Ascending aorta (tissue), 2 donors: ENCODE measurements at regions of chr20 and their contacts with region 1.

Region 1: GRCh38 chr20:25623736-25624499 is at the start of gene NANP:
- DNase-seq: peak; percentile 95 to 99
- H3K4me3 ChIP-seq: peak within 1 kb of the TSS; percentile 88 to 95
- H3K27ac ChIP-seq: peak within 1 kb of the TSS; percentile 90 to 94
- H3K4me1 ChIP-seq: peaks cover 0 to 6% of the 10 kb centered on the region in 2 donors
- H3K27me3 ChIP-seq: no peaks in the 10 kb centered on the region
- CTCF ChIP-seq: no peak
- total RNA-seq, gene NANP: 2.6 TPM

Region 2: DNA sequence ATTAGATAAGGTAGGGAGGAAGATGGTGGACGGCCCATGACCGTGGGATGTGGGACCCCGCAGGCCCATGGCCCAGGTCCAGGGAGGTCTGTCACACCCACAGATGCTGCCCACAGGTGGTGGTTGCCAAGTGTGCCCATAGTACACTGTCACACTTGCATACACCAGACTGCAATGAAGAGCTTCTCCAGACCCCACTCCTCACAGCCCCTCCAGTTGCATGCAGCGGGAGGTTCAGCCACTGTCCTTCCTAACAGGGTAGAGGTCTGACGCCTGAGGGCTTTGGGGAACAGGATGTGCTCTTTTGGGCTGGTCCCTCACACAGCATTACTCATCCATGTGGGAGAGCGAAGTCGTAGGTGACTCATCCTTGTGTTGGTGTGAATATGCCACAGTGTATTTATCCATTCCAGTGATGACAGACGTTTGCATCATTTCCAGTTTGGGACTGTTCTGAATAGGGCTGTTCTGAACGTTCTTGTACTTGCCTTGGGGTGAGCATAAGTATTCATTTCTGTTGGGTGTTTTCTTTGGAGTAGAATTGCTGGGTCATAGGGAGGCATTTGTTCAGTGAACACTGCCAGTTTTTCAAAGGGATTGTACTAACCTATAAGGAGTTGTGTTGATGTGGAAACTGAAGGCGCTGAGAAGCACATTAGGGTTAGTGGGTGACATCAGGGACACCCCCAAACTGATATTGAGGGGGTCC is 386.2 kb before region 1 on chr20:
- intact Hi-C with region 1: no loop called
- DNase-seq: peak; percentile 78 to 94
- H3K4me3 ChIP-seq: no peak overlapping the region
- H3K27ac ChIP-seq: peak overlapping the region; percentile 83 to 97
- H3K4me1 ChIP-seq: peaks cover 21 to 48% of the 10 kb centered on the region in 2 donors
- H3K27me3 ChIP-seq: no peaks in the 10 kb centered on the region
- CTCF ChIP-seq: no peak

Region 3: GRCh38 chr20:25390538-25391528 is 233.1 kb before region 1 on chr20 and contains the start of gene ABHD12:
- intact Hi-C with region 1: loop called (anchors 10 kb)
- DNase-seq: peak; percentile 91 to 99
- H3K4me3 ChIP-seq: peak within 1 kb of the TSS; percentile 83 to 99
- H3K27ac ChIP-seq: peak within 1 kb of the TSS; percentile 70 to 91
- H3K4me1 ChIP-seq: peaks cover 0 to 3% of the 10 kb centered on the region in 2 donors
- H3K27me3 ChIP-seq: no peaks in the 10 kb centered on the region
- CTCF ChIP-seq: no peak
- total RNA-seq, gene ABHD12: 24.3 TPM

Region 4: GRCh38 chr20:25508078-25508770 is 115.7 kb before region 1 on chr20:
- intact Hi-C with region 1: loop called (anchors 1 kb)
- DNase-seq: no peak
- H3K4me3 ChIP-seq: no peak overlapping the region
- H3K27ac ChIP-seq: peak overlapping the region; percentile 63 to 70
- H3K4me1 ChIP-seq: peaks cover 4 to 10% of the 10 kb centered on the region in 2 donors
- H3K27me3 ChIP-seq: no peaks in the 10 kb centered on the region
- CTCF ChIP-seq: no peak

Region 5: DNA sequence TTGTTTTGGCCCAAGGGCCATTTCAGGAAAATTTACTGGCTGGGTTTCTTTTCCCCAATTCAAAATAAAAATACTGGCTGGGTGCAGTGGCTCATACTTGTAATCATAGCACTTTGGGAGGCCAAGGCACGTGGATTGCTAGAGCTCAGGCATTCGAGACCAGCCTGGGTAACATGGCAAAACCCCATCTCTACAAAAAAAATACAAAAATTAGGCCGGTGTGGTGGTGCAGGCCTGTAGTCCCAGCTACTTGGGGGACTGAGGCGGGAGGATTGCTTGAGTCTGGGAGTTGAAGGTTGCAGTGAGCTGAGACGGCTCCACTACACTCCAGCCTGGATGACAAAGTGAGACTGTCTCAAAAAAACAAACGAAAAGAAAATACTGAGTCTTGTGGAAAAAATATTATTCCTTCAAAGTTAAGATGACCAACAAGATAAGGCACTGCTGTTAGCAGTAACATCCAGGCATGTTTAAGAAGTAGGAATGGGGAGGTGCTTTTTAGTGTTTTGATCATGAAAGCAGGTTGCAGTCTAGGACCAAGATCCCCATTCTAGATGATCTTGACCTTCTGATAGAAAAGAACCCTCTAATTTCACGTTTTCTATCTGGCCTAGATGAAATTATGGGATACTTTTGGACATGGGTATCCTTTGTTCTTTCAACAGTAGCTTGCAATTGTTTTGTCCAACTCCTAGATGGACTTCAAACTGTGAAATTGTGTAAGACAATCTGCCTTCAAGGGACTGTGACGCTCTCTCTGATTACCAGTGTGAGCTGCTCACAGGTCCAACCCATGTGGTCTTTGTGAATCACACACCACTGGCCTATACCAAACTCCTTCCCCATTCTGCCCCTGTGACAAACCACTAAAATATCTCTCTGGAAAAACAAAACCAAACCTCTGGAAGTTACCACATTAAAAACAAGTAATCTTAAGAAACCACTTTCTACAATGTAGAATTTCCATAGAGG is 98.3 kb before region 1 on chr20:
- intact Hi-C with region 1: loop called (anchors 2 kb)
- DNase-seq: peak; percentile 49 to 87
- H3K4me3 ChIP-seq: peak overlapping the region in 1 of 2 donors; percentile 2
- H3K27ac ChIP-seq: peak overlapping the region; percentile 88 to 89
- H3K4me1 ChIP-seq: peaks cover 8 to 15% of the 10 kb centered on the region in 2 donors
- H3K27me3 ChIP-seq: no peaks in the 10 kb centered on the region
- CTCF ChIP-seq: no peak

Region 6: GRCh38 chr20:25584905-25585704 is 38.8 kb before region 1 on chr20 and contains the start of gene NINL:
- intact Hi-C with region 1: loop called (anchors 1 kb)
- DNase-seq: peak in 1 of 2 donors; percentile 78
- H3K4me3 ChIP-seq: peak within 1 kb of the TSS; percentile 68 to 76
- H3K27ac ChIP-seq: peak within 1 kb of the TSS; percentile 38 to 50
- H3K4me1 ChIP-seq: no peaks in the 10 kb centered on the region
- H3K27me3 ChIP-seq: no peaks in the 10 kb centered on the region
- CTCF ChIP-seq: no peak
- total RNA-seq, gene NINL: 18.0 TPM

Region 7: DNA sequence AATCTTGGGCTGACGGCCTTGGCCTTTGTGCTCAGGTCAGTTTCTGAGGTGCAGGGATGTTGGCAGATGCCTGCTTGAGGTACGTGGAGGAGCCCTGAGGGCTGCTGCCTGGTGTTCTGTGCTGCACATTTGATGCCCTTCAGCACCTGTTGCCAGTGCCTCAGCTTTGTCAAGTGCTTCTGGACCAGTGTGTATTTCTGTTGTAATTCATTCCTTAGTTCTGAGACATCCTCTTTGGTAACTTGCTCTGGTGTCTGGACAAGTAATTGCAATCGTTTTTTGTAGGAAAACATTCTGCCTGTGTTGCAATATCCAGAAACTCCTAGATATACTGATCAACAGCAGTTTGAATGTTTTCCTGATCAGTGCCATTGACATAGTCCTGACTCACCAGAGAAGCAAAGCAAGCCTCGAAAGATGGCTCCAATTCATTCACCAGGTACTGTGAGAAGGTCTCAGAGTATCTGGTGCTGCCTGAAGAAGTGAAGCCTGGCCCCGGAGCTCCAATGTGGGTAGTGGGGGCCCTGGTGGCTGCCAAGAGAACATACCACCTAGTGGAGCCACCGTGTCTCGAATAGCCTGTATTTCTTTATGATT is 46.0 kb after region 1 on chr20:
- intact Hi-C with region 1: no loop called
- DNase-seq: no peak
- H3K4me3 ChIP-seq: no peak overlapping the region
- H3K27ac ChIP-seq: no peak overlapping the region
- H3K4me1 ChIP-seq: no peaks in the 10 kb centered on the region
- H3K27me3 ChIP-seq: no peaks in the 10 kb centered on the region
- CTCF ChIP-seq: no peak

Region 8: DNA sequence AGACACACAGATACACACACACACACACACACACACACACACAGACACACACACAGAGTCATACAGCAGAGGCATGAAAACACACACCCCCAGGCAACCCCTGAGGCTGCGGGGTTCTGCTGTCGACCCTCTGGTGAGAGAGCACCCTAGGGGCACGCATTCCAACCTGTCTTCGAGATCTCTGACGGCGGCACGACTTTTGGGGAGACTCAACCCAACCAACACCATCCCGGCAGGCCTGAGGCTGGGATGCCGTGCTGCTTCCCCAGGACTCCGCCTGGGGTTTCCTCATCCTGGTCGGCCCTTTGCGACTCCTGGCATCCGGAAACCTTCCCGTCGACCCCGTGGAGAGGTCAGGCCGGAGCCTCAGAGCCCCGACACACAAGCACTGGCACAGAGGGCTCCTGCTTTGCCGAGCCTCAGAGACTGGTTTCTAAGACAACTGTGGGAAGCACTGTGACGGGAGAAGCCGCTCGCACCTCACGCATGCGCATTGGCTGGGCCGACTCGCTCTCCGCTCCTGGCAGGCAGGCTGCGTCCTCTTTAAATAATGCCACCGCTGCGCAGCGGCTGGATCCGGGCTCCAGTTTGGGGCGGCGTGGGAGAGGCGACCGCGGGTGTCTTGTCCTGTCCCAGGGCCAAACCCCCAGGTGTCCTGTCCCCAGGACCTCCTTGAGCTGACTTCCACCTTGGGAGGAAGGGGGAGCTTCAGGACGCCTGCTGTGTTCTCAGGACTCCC is 241.6 kb after region 1 on chr20:
- intact Hi-C with region 1: loop called (anchors 5 kb)
- DNase-seq: peak in 1 of 2 donors; percentile 87
- H3K4me3 ChIP-seq: peak overlapping the region; percentile 29 to 62
- H3K27ac ChIP-seq: no peak overlapping the region
- H3K4me1 ChIP-seq: peaks cover 9 to 19% of the 10 kb centered on the region in 2 donors
- H3K27me3 ChIP-seq: no peaks in the 10 kb centered on the region
- CTCF ChIP-seq: no peak